ENCODE measurements at regions of chr14 and their contacts with region 1.

Region 1: GRCh38 chr14:23327947-23328744 is 6.9 kb downstream of the PABPN1 start:
- DNase-seq: peak in 1 of 2 donors; percentile 85
- H3K4me3 ChIP-seq: no peak overlapping the region
- H3K27ac ChIP-seq: no peak overlapping the region
- H3K4me1 ChIP-seq: peaks cover under 1 to 2% of the 10 kb centered on the region in 2 donors
- H3K27me3 ChIP-seq: no peaks in the 10 kb centered on the region
- CTCF ChIP-seq: peak; percentile 78 to 88 (median 82)

Region 2: DNA sequence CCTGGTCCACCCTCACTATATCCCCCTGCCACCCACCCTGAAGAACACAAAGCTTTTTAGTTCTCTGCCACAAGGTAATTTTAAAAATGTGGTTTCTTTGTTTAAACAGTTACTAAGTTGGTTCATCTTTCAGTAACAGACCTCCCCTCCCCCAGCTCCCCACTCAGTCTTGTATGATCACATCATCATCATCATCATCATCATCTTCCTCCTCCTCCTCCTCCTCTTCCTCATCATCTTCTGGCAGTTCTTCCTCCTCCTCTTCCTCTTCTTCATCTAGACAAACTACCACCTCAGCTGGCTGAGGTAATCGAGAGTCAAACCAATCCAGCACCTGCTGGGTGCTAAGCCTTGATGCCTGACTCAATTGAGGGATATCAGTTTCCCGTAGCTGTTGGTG is 52.7 kb before region 1 on chr14:
- intact Hi-C with region 1: no loop called
- DNase-seq: no peak
- H3K4me3 ChIP-seq: no peak overlapping the region
- H3K27ac ChIP-seq: no peak overlapping the region
- H3K4me1 ChIP-seq: no peaks in the 10 kb centered on the region
- H3K27me3 ChIP-seq: no peaks in the 10 kb centered on the region
- CTCF ChIP-seq: no peak

Region 3: DNA sequence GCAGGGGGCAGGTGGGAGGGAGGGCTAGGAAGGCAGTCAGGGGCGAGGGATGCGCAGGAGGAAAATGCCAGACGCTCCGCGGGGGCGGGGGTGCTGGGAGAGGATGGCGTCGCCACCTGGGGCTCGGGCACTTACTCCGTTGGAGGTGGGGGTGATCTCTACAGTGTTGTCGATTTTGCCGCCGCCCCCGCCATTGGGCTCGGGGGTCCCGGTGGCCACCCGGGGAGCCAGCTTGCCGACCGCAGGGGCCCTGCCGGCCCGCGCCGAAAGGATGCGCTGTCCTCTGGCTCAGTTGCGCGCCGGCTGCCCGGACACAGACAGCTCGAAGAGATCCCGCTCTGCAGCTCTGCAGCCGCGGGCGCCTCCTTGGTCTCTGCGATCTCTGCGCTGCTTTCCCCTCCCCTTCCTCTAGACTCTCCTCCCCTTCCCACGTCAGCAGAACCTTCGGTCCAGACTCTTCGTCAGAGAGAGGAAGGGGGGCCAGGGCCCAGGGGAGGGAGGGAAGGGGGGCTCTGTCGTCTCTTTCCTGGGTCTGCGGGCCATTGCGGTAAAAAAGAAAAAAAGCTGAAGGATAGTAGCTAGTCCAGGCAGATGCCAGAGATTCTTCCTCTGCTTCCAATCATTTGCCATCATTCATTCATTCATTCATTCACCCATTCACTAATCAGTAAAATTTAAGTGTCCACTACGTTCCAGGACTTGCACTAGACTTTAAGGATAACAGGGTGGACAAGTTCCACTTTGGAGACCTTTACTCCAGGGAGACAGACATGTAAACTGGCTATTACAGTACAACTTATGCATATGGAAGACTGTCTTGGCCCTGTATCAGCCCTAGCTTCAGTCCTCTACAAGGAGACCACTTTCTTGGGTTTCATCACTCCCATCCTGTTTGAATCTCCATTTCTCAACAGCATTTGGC is 24.6 kb after region 1 on chr14 and contains the start of gene SLC22A17:
- intact Hi-C with region 1: loop called (anchors 1 kb)
- DNase-seq: peak in 1 of 2 donors; percentile 91
- H3K4me3 ChIP-seq: peak within 1 kb of the TSS; percentile 69 to 81
- H3K27ac ChIP-seq: peak within 1 kb of the TSS in 1 of 2 donors; percentile 24
- H3K4me1 ChIP-seq: peaks cover 4 to 9% of the 10 kb centered on the region in 2 donors
- H3K27me3 ChIP-seq: no peaks in the 10 kb centered on the region
- CTCF ChIP-seq: peak in 1 of 3 experiments; percentile 13
- total RNA-seq, gene SLC22A17: 89.7 TPM

Region 4: GRCh38 chr14:23379366-23380196 is 51.4 kb after region 1 on chr14:
- intact Hi-C with region 1: loop called (anchors 1 kb)
- DNase-seq: no peak
- H3K4me3 ChIP-seq: no peak overlapping the region
- H3K27ac ChIP-seq: no peak overlapping the region
- H3K4me1 ChIP-seq: no peaks in the 10 kb centered on the region
- H3K27me3 ChIP-seq: no peaks in the 10 kb centered on the region
- CTCF ChIP-seq: peak; percentile 84 to 93 (median 84)

Region 5: GRCh38 chr14:23621204-23621931 is 293.2 kb after region 1 on chr14:
- intact Hi-C with region 1: no loop called
- DNase-seq: no peak
- H3K4me3 ChIP-seq: no peak overlapping the region
- H3K27ac ChIP-seq: no peak overlapping the region
- H3K4me1 ChIP-seq: no peaks in the 10 kb centered on the region
- H3K27me3 ChIP-seq: no peaks in the 10 kb centered on the region
- CTCF ChIP-seq: no peak